Adrenal gland (tissue), 19 donors: ENCODE measurements at regions of chr5 and their contacts with region 1.

Region 1: DNA sequence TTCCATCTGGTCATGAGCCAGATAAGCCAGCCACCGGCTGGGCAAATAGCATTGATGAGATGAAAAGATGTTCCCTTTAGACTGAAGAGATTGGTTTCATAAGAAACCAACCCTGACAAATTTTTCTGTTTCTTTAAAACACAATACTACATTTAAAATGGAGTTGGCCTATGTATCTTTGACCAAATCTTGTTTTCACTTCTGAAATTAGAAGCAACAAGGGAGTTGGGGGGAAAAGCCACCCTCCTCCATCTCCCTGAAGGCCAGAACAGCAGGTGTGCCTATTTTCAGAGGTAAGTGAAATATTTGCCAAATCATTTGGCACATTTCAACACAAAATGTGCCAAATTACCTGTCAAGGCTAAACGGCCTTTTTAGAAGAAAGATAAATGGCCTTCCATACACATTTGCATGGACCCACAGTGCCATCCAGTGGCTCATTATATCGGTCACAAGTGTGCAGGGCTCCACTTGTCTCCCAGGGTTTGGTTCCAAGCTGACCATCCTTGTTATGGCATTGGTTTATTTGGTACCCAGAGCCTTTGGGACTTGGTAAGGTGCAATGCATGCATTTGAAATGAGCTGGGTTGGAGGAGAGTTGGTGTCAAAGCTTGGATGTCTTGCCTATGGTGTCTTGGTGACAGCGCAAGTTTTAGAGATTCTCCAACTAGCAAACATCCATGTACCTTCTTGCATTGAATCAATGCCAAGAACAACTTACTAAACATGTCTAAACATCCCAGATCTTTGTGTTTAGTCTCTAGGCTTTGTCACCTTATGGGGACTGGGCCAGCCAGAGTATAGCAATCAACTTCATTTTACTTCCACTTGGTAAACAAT is 372.0 kb upstream of the KIF2A start:
- DNase-seq: peak; percentile 40 to 85 (median 51)
- H3K4me3 ChIP-seq: peak overlapping the region in 1 of 4 donors; percentile 46
- H3K27ac ChIP-seq: no peak overlapping the region
- H3K4me1 ChIP-seq: no peaks in the 10 kb centered on the region
- H3K27me3 ChIP-seq: no peaks in the 10 kb centered on the region
- CTCF ChIP-seq: peak; percentile 60 to 88 (median 79)
- POLR2A ChIP-seq: no peak

Region 2: GRCh38 chr5:60677844-60678664 is 1256.0 kb before region 1 on chr5:
- intact Hi-C with region 1: loop called in 1 of 2 experiments (anchors 10 kb)
- DNase-seq: no peak
- H3K4me3 ChIP-seq: no peak overlapping the region
- H3K27ac ChIP-seq: no peak overlapping the region
- H3K4me1 ChIP-seq: no peaks in the 10 kb centered on the region
- H3K27me3 ChIP-seq: no peaks in the 10 kb centered on the region
- CTCF ChIP-seq: peak; percentile 42 to 71 (median 58)
- POLR2A ChIP-seq: no peak

Region 3: DNA sequence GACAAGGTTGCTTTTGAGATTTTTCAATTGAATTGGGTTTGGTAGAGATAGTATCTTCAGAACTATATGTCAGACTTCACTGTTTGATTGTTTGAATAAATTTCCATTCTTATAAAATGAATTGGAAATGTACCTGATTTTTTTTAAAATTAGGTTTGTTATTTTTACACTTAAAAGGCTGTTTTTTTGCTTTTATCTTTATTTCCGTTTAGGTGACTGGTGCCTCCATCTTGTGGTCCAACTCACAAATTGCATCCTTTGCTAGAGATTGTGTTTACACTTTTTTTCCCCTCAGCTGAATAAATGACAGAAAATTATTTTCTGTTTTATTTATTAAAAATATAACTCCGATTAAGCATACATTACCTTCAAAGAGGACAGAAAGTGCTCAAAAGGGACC is 973.4 kb before region 1 on chr5:
- intact Hi-C with region 1: loop called in 1 of 2 experiments (anchors 10 kb)
- DNase-seq: no peak
- H3K4me3 ChIP-seq: no peak overlapping the region
- H3K27ac ChIP-seq: no peak overlapping the region
- H3K4me1 ChIP-seq: no peaks in the 10 kb centered on the region
- H3K27me3 ChIP-seq: no peaks in the 10 kb centered on the region
- CTCF ChIP-seq: peak in 5 of 6 experiments; percentile 28 to 55 (median 38)
- POLR2A ChIP-seq: no peak

Region 4: GRCh38 chr5:61055434-61056006 is 878.5 kb before region 1 on chr5:
- intact Hi-C with region 1: loop called in 1 of 2 experiments (anchors 10 kb)
- DNase-seq: no peak
- H3K4me3 ChIP-seq: no peak overlapping the region
- H3K27ac ChIP-seq: no peak overlapping the region
- H3K4me1 ChIP-seq: peaks cover 3 to 8% of the 10 kb centered on the region in 2 donors
- H3K27me3 ChIP-seq: no peaks in the 10 kb centered on the region
- CTCF ChIP-seq: peak; percentile 42 to 69 (median 62)
- POLR2A ChIP-seq: no peak